WTC11 (cell line): ENCODE measurements at regions of chr10 and their contacts with region 1.

Region 1: DNA sequence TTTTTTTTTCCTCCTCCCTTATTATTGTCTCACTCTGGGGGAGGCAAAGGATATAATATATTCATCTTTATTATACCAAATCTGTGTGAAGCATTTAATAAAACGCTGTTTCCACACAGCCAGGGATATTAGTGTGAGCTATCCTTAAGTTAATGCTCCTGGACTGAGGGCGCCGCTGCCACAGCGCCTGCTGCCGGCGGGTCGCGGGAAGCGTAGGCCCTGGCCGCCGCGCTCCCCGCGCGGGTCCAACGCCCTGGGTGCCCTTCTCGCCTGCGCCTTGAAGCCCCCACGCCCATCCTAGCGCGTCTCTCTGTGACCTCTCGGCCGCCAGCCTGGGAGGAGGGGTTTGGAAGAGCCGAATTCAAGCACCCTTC is 9.5 kb upstream of the LBX1 start:
- DNase-seq: peak; percentile 55
- ATAC-seq: peak; percentile 50
- H3K4me3 Mint-ChIP-seq: no peak overlapping the region
- H3K27ac Mint-ChIP-seq: no peak overlapping the region
- H3K4me1 Mint-ChIP-seq: peaks cover 25% of the 10 kb centered on the region
- H3K27me3 Mint-ChIP-seq: peaks cover 86% of the 10 kb centered on the region
- CTCF ChIP-seq: no peak

Region 2: DNA sequence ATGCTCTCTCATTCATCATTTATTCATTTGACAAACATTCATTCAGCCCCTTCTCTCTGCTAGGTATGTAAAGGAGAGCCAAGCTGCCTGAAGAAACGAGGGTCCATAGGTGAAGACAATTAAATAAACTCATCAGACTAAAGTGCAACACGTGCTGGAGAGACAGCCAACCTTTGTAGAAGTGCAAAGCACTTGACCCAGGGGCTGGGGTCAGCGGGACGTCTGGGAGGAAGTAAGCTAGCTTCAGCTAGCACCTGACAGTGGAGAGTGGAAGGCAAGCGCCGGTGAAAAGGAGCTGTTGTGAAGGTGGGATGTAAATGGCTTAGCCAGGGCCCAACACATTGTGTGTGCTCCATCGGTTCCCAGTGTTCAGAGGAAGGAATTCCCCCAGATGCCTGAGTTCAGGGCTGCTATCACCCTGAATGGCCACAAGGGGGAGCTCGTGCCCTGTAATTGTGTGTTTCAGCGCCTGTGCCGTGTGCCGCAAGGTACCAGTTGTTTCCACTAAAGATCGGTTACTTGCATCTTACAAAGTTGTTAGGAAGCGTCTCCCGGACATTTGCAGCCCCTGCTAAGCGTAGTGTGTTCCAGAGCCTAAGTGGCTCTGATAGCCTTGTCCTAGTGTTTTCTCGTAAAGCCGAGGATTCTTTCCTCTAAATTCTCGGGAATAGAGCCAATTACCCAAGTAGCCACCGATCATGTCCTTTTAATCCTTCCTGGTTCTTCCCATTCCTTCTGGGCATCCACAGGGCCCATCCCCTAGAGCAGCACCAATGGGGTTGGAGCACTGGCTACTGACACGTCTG is 77.0 kb before region 1 on chr10:
- CTCF ChIA-PET with region 1: interaction called, 10 read pairs
- POLR2A ChIA-PET with region 1: no interaction called
- DNase-seq: peak; percentile 83
- ATAC-seq: peak; percentile 96
- H3K4me3 Mint-ChIP-seq: peak overlapping the region; percentile 55
- H3K27ac Mint-ChIP-seq: no peak overlapping the region; the same call in 1 of the 2 replicates
- H3K4me1 Mint-ChIP-seq: peaks cover 37% of the 10 kb centered on the region
- H3K27me3 Mint-ChIP-seq: peaks cover 52% of the 10 kb centered on the region
- CTCF ChIP-seq: peak; percentile 97

Region 3: GRCh38 chr10:101222683-101223273 is 15.9 kb before region 1 on chr10:
- CTCF ChIA-PET with region 1: interaction called, 95 read pairs
- POLR2A ChIA-PET with region 1: interaction called, 3 read pairs
- DNase-seq: no peak
- ATAC-seq: no peak; the same call in 1 of the 2 replicates
- H3K4me3 Mint-ChIP-seq: 0 out of 2 replicates have a peak overlapping the region, but pooled peaks have one; percentile 8
- H3K27ac Mint-ChIP-seq: no peak overlapping the region
- H3K4me1 Mint-ChIP-seq: peaks cover 53% of the 10 kb centered on the region
- H3K27me3 Mint-ChIP-seq: peaks cover 98% of the 10 kb centered on the region
- CTCF ChIP-seq: no peak

Region 4: DNA sequence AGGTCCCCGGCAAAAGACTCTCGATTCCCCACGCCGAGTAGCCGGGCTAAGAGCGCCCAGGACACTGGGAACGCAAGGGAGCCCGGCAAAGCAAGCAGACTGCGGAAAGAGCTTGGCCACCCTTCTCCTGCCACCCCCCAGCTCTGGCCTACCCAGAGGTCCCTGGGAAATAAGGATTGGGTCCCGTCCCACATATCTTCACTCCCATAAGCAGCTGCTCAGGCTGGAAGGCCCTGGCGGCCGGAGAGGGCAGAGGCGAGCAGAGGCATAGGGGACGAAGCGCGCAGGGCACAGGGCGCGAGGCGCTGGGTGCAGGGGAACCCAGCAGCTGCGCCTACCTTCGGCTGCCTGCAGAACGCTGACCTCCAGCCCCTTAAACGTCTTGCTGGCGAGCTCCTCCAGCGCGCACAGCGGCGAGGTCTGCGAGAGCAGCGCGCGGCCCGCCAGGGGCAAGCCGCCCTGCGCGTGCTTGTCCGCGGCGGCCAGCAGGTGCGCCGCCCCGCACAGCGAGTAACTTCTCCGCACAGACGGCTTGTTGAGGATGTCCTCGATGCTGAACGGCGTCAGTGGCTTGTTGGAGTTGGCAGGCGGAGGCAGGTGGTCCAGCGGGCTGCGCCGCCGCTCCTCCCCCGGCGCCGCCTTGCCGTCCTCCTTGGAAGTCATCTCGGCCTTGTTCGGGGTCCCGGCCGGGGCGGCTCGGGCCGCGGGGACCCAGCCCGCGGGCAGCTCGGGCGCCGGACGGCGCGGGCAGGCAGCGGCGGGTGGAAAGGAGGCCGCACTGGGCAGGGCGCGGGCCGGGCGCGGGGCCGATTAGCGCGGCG is 10.4 kb before region 1 on chr10:
- CTCF ChIA-PET with region 1: interaction called, 12 read pairs
- POLR2A ChIA-PET with region 1: no interaction called
- DNase-seq: peak; percentile 58
- ATAC-seq: peak; percentile 29
- H3K4me3 Mint-ChIP-seq: no peak overlapping the region
- H3K27ac Mint-ChIP-seq: no peak overlapping the region
- H3K4me1 Mint-ChIP-seq: peaks cover 44% of the 10 kb centered on the region
- H3K27me3 Mint-ChIP-seq: peaks cover 96% of the 10 kb centered on the region
- CTCF ChIP-seq: no peak

Region 5: DNA sequence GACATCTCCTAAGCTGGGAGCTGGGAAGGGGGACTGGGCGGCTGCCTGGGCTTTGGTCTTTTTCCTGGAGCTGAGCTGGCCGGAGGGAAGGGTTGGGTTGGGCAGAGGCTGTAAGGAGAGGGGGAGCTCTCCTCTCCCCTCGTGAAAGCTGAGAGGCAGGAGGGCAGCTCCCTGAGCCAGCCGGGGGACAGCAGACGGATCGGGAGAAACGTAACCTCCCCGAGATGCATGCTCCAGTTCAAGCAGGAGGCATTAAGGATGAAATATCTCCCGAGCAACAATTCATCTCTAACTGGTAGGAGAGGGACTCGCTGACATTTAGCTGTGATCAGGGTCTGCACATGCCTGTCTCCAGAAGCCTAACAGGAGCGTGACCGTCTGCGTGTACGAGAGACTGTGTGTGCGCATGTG is 10.5 kb after region 1 on chr10:
- CTCF ChIA-PET with region 1: interaction called, 22 read pairs
- POLR2A ChIA-PET with region 1: interaction called, 4 read pairs
- DNase-seq: no peak
- ATAC-seq: no peak
- H3K4me3 Mint-ChIP-seq: no peak overlapping the region
- H3K27ac Mint-ChIP-seq: no peak overlapping the region
- H3K4me1 Mint-ChIP-seq: peaks cover 4% of the 10 kb centered on the region
- H3K27me3 Mint-ChIP-seq: peaks cover 42% of the 10 kb centered on the region
- CTCF ChIP-seq: no peak

Region 6: GRCh38 chr10:101258179-101258885 is 19.6 kb after region 1 on chr10:
- CTCF ChIA-PET with region 1: interaction called, 108 read pairs
- POLR2A ChIA-PET with region 1: no interaction called
- DNase-seq: no peak
- ATAC-seq: peak; percentile 64
- H3K4me3 Mint-ChIP-seq: no peak overlapping the region
- H3K27ac Mint-ChIP-seq: no peak overlapping the region
- H3K4me1 Mint-ChIP-seq: peaks cover 41% of the 10 kb centered on the region
- H3K27me3 Mint-ChIP-seq: peaks cover 25% of the 10 kb centered on the region
- CTCF ChIP-seq: no peak

Region 7: DNA sequence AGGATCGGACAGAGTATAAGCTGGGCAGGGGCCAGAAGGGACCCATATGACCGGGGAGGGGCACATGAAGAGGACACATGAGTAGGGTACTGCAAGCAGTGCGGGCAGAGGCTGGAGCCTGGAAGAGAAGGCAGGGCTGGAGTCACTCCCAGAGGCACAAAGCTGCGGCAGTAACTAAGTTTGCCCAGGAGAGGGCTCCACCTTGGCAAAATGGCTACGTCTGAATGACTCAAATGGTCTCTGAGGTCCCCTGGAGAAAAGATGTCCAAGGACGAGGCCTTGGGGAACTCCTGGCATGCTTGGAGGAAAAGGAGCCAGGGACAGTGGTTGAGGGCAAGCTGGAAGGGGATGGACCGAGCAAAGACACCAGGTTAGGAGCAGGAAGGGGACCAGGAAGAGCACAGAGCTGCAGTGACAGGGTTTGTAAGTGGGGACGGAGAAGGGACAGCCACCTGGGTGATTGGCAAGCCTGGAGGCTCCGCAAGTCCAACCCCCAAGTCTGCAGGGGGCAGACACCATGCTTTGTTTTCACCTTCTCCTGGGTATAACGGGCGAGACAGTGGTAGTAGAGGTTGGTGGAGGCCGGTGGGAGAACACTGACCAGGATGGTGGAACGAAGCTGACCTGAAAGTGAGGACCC is 33.6 kb after region 1 on chr10:
- CTCF ChIA-PET with region 1: interaction called, 108 read pairs
- POLR2A ChIA-PET with region 1: no interaction called
- DNase-seq: peak; percentile 84
- ATAC-seq: peak; percentile 97
- H3K4me3 Mint-ChIP-seq: no peak overlapping the region
- H3K27ac Mint-ChIP-seq: no peak overlapping the region
- H3K4me1 Mint-ChIP-seq: peaks cover 14% of the 10 kb centered on the region
- H3K27me3 Mint-ChIP-seq: peaks cover 15% of the 10 kb centered on the region
- CTCF ChIP-seq: peak; percentile 68

Region 8: DNA sequence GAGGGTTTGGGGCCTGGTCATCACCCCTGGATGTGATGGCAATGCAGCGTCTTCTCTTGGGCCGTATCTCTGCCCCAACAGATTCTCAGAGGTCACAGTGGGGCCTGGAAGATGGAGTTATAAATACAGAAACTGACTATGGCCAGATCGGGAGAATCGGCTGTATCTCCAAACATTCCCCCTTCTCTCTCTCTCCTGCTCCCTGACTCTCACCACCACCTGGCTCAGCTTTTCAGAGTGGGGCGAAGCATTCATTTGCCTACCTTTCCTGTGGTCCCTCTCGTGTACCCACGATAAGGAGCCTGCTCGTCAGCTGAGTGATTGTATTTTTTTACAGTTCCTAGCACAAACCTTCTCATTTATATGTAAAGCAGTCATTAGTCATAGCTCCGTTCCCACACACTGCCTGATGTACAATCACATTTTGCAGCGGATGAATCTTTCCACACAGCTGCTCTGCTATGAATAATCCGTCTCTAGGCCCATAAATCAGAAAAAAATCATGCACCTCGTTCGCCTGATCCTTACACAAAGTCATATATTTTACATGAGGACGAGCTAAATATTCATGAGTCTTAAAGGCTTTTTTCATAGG is 92.0 kb after region 1 on chr10:
- CTCF ChIA-PET with region 1: no interaction called
- POLR2A ChIA-PET with region 1: no interaction called
- DNase-seq: no peak
- ATAC-seq: no peak
- H3K4me3 Mint-ChIP-seq: no peak overlapping the region
- H3K27ac Mint-ChIP-seq: no peak overlapping the region
- H3K4me1 Mint-ChIP-seq: peaks cover 11% of the 10 kb centered on the region
- H3K27me3 Mint-ChIP-seq: peaks cover 3% of the 10 kb centered on the region; the same call in 1 of the 2 replicates
- CTCF ChIP-seq: no peak